ENCODE measurements at regions of chr9 and their contacts with region 1.

Region 1: DNA sequence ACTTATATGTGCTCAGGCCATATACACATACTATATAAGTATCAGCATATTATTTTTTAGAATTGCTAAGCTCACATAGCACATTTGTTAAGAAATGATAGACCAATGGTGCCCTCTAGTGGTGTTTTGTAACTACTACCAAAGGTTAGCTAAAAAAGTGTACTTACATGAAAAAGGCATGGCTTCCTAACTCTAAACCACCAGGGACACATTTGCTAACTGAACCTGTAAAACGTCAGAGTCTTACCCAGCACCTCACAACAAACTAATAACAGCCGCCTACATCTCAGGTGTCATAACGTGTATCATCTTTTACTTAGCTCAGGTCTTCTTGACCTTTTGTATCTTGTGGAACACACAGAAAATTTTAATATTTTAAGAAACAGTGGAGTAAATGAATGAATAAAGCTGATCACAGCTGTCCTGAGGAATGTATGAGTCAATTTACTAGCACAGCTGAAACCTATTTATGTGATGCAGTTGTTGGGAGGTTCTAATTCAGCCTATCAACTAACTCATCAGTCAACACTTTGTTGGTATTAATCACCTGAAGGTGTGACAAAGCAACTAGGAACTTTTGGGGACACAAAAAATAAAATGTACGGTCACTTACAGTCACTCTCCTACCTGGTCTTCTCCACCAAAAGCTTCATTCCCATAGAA is 72.9 kb downstream of the BAAT start:
- DNase-seq: no peak
- H3K4me3 Mint-ChIP-seq: no peak overlapping the region
- H3K27ac Mint-ChIP-seq: no peak overlapping the region
- H3K4me1 Mint-ChIP-seq: no peaks in the 10 kb centered on the region
- H3K27me3 Mint-ChIP-seq: peaks cover 1% of the 10 kb centered on the region

Region 2: GRCh38 chr9:100601216-100601615 is 710.7 kb before region 1 on chr9:
- CTCF ChIA-PET with region 1: interaction called, 26 read pairs
- POLR2A ChIA-PET with region 1: no interaction called
- DNase-seq: peak; percentile 56
- H3K4me3 Mint-ChIP-seq: no peak overlapping the region
- H3K27ac Mint-ChIP-seq: no peak overlapping the region
- H3K4me1 Mint-ChIP-seq: peaks cover 19% of the 10 kb centered on the region
- H3K27me3 Mint-ChIP-seq: peaks cover 11% of the 10 kb centered on the region

Region 3: DNA sequence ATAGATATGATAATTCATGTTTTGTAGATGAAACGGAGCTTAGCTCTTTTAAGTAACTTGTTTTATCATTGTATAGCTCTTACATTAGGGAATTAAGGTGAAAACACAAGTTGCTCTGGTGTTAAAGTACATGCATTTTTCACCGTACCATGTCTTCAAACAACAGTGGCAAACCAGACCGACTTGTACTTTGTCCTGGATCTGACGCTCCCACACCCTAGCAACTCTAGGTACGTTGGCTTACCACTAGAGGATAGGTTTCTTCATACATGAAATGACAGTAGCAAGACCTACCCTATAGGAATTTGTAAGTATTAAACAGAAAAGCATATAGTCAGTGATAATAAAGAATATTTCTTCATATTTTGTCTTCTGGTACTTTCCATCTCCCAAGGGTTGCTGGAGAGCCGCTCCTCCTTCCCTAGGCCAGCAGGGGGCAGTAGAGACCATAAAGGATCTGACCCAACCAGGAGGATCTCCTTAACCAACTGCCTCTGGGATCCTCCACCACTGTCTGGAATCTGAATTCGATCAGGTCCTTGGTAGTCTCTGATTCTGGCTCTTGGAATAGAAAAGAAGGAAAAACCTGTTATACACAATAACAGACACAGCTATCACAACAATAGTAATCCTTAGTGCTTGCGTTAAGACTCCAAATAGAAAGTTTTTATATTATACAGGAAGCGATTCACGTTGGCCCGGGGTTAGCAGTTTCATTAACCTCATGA is 597.4 kb before region 1 on chr9:
- CTCF ChIA-PET with region 1: interaction called, 28 read pairs
- POLR2A ChIA-PET with region 1: no interaction called
- DNase-seq: peak; percentile 54
- H3K4me3 Mint-ChIP-seq: no peak overlapping the region
- H3K27ac Mint-ChIP-seq: no peak overlapping the region
- H3K4me1 Mint-ChIP-seq: no peaks in the 10 kb centered on the region
- H3K27me3 Mint-ChIP-seq: no peaks in the 10 kb centered on the region

Region 4: DNA sequence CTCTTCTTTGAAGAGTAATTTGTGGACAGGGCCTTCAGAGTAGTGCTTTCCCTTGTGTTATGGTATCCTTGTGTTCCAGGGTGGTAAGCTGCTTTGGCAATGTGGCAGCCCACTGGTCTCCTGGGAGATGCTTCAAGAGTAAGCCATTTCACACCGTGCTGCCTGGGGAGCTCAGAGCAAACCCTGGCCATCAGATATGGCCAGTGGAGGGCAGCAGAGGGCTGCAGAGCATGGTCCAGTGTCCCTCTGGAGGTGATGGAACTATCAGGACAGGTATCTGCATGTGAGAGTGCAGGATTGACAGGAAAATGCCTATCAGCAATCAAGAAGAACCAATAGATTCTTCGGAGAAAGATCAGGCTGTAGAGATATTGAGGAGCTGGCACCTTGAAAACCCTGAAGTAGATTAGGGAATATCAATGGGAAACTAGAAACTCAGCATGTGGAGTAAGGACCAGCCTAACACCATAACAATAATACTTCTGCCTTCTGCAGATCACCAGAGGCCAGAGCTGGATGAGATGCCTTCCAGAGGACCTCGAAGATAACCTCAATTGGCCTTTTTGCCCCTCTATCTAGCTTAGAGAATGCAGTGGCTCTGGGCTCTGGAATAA is 192.6 kb before region 1 on chr9:
- CTCF ChIA-PET with region 1: interaction called, 20 read pairs
- POLR2A ChIA-PET with region 1: no interaction called
- DNase-seq: peak; percentile 29
- H3K4me3 Mint-ChIP-seq: no peak overlapping the region
- H3K27ac Mint-ChIP-seq: no peak overlapping the region
- H3K4me1 Mint-ChIP-seq: no peaks in the 10 kb centered on the region
- H3K27me3 Mint-ChIP-seq: no peaks in the 10 kb centered on the region

Region 5: GRCh38 chr9:101242651-101243050 is 69.2 kb before region 1 on chr9:
- CTCF ChIA-PET with region 1: no interaction called
- POLR2A ChIA-PET with region 1: no interaction called
- DNase-seq: no peak
- H3K4me3 Mint-ChIP-seq: no peak overlapping the region
- H3K27ac Mint-ChIP-seq: no peak overlapping the region
- H3K4me1 Mint-ChIP-seq: no peaks in the 10 kb centered on the region
- H3K27me3 Mint-ChIP-seq: no peaks in the 10 kb centered on the region

Region 6: DNA sequence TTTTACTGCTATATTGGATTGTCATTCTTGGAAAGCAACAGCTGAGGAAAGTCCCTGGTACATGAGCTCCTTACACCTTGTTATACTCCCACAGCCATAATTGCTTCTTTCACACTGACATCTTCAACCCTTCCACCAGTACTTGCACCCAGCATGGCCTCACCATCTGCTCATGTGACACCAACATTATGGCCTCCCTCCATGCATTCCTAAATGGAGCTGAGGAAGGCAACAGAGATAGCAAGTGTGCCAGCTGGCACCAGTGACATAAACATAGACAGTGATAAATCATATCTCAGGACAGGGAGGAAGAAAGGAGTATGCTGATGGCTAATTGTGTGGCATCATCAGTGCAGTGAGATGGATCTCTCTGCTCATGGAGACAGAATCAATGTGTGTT is 46.6 kb before region 1 on chr9:
- CTCF ChIA-PET with region 1: no interaction called
- POLR2A ChIA-PET with region 1: no interaction called
- DNase-seq: no peak
- H3K4me3 Mint-ChIP-seq: no peak overlapping the region
- H3K27ac Mint-ChIP-seq: no peak overlapping the region
- H3K4me1 Mint-ChIP-seq: no peaks in the 10 kb centered on the region
- H3K27me3 Mint-ChIP-seq: no peaks in the 10 kb centered on the region

Region 7: DNA sequence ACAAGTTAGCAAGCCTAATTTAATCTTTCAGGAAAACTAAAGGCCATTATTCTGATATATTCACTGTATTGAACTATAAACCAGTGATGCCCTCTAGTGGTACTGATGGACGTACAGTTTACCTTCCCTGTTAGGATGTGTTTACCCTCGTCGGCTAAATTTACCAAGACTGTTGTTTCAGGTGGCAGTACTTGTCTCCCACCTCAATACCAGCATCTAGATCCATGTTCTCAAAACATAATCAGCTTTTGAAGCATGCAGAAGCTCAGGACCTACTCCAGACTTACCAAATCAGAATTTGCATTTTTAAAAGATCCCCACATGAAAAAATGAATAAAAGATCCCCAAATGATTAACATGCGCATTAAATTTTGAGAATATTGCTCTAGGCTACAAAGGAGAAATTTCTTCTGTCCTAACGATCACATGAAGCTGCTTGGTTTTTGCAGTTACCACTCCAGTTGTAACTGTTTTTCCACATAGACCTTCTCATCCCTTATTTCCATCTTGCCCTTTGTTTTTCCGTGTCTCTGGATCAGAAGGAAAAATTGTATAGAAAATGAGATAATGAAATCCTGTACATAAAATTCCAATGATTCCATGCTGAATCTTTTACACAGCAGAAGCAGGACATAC is 76.1 kb after region 1 on chr9:
- CTCF ChIA-PET with region 1: no interaction called
- POLR2A ChIA-PET with region 1: no interaction called
- DNase-seq: no peak
- H3K4me3 Mint-ChIP-seq: no peak overlapping the region
- H3K27ac Mint-ChIP-seq: no peak overlapping the region
- H3K4me1 Mint-ChIP-seq: peaks cover 8% of the 10 kb centered on the region
- H3K27me3 Mint-ChIP-seq: peaks cover 2% of the 10 kb centered on the region

Region 8: GRCh38 chr9:101468116-101468515 is 156.2 kb after region 1 on chr9:
- CTCF ChIA-PET with region 1: no interaction called
- POLR2A ChIA-PET with region 1: no interaction called
- DNase-seq: no peak
- H3K4me3 Mint-ChIP-seq: no peak overlapping the region
- H3K27ac Mint-ChIP-seq: no peak overlapping the region
- H3K4me1 Mint-ChIP-seq: no peaks in the 10 kb centered on the region
- H3K27me3 Mint-ChIP-seq: peaks cover 25% of the 10 kb centered on the region